IMR-90 (cell line): ENCODE measurements at regions of chr15 and their contacts with region 1.

Region 1: GRCh38 chr15:58227706-58228543 is 89.7 kb downstream of the AQP9 start:
- DNase-seq: peak; percentile 84
- ATAC-seq: peak; percentile 76
- H3K4me3 ChIP-seq: no peak overlapping the region
- H3K27ac ChIP-seq: no peak overlapping the region
- H3K4me1 ChIP-seq: peaks cover 14% of the 10 kb centered on the region
- H3K27me3 ChIP-seq: no peaks in the 10 kb centered on the region
- CTCF ChIP-seq: peak; percentile 95
- POLR2A ChIP-seq: 0 out of 2 replicates have a peak, but pooled peaks have one; percentile 41
- RAD21 ChIP-seq: peak; percentile 99

Region 2: GRCh38 chr15:58498821-58499580 is 271.1 kb after region 1 on chr15:
- CTCF ChIA-PET with region 1: no interaction called
- POLR2A ChIA-PET with region 1: no interaction called
- dilution Hi-C with region 1: no loop called
- in situ Hi-C with region 1: no loop called
- intact Hi-C with region 1: loop called (anchors 1 kb)
- DNase-seq: peak; percentile 98
- ATAC-seq: peak; percentile 94
- H3K4me3 ChIP-seq: no peak overlapping the region
- H3K27ac ChIP-seq: peak overlapping the region; percentile 64
- H3K4me1 ChIP-seq: peaks cover 24% of the 10 kb centered on the region
- H3K27me3 ChIP-seq: no peaks in the 10 kb centered on the region
- CTCF ChIP-seq: no peak
- POLR2A ChIP-seq: no peak
- RAD21 ChIP-seq: no peak; the same call in 1 of the 2 replicates

Region 3: GRCh38 chr15:58749532-58750337 is 521.8 kb after region 1 on chr15 and contains the start of gene ADAM10:
- CTCF ChIA-PET with region 1: interaction called, 4 read pairs
- POLR2A ChIA-PET with region 1: no interaction called
- dilution Hi-C with region 1: no loop called
- in situ Hi-C with region 1: loop called (anchors 25 kb)
- intact Hi-C with region 1: loop called (anchors 2 kb)
- DNase-seq: peak; percentile 99
- ATAC-seq: peak; percentile 94
- H3K4me3 ChIP-seq: peak within 1 kb of the TSS; percentile 74
- H3K27ac ChIP-seq: peak within 1 kb of the TSS; percentile 93
- H3K4me1 ChIP-seq: no peaks in the 10 kb centered on the region
- H3K27me3 ChIP-seq: no peaks in the 10 kb centered on the region
- CTCF ChIP-seq: no peak
- POLR2A ChIP-seq: peak; percentile 86
- RAD21 ChIP-seq: no peak; the same call in 1 of the 2 replicates
- total RNA-seq, gene ADAM10: 185 and 217 TPM in 2 replicates

Region 4: DNA sequence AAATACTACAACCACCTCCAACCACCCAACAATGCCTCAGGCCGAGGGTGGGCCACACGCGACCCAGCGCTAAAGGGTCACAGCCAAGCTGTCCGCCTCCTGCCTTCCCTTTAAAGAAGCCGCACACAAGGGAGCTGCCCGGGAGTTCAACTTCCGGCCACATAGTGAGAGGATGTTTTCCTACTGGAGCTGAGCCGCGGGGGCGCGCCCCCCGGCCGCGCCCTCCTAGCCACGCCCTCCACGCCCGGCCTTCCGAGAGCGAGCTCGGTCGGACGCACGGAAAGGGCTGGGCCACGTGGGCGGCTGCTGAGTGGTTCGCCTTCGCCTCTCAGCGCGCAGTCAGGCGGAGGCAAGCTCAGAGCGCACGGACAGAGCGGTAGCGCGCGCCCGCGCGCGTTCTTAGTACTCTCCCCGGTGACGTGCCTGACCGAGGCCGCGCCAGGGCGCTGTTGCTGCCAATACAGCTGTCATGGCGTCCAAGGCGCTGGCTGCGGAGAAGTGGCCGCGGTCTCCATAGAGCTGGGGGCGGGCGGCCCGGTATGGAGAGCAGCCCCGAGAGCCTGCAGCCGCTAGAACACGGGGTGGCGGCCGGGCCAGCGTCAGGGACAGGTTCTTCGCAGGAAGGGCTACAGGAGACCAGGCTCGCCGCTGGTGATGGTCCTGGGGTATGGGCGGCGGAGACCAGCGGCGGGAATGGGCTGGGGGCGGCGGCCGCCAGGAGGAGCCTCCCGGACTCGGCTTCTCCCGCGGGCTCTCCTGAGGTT is 543.1 kb after region 1 on chr15 and contains the start of gene MINDY2:
- CTCF ChIA-PET with region 1: interaction called, 8 read pairs
- POLR2A ChIA-PET with region 1: no interaction called
- dilution Hi-C with region 1: no loop called
- in situ Hi-C with region 1: loop called (anchors 25 kb)
- intact Hi-C with region 1: loop called (anchors 5 kb)
- DNase-seq: peak; percentile 99
- ATAC-seq: peak; percentile 95
- H3K4me3 ChIP-seq: peak within 1 kb of the TSS; percentile 88
- H3K27ac ChIP-seq: peak within 1 kb of the TSS; percentile 93
- H3K4me1 ChIP-seq: no peaks in the 10 kb centered on the region
- H3K27me3 ChIP-seq: no peaks in the 10 kb centered on the region
- CTCF ChIP-seq: peak; percentile 33; the same call in 1 of the 2 replicates
- POLR2A ChIP-seq: peak; percentile 67; the same call in 1 of the 2 replicates
- RAD21 ChIP-seq: peak; percentile 28
- total RNA-seq, gene MINDY2: 9.3 and 15.0 TPM in 2 replicates

Region 5: GRCh38 chr15:58852347-58852746 is 624.4 kb after region 1 on chr15:
- CTCF ChIA-PET with region 1: interaction called, 3 read pairs
- POLR2A ChIA-PET with region 1: no interaction called
- dilution Hi-C with region 1: no loop called
- in situ Hi-C with region 1: no loop called
- intact Hi-C with region 1: loop called (anchors 10 kb)
- DNase-seq: no peak
- ATAC-seq: no peak
- H3K4me3 ChIP-seq: no peak overlapping the region
- H3K27ac ChIP-seq: no peak overlapping the region
- H3K4me1 ChIP-seq: no peaks in the 10 kb centered on the region
- H3K27me3 ChIP-seq: no peaks in the 10 kb centered on the region
- CTCF ChIP-seq: no peak
- POLR2A ChIP-seq: no peak
- RAD21 ChIP-seq: no peak

Region 6: DNA sequence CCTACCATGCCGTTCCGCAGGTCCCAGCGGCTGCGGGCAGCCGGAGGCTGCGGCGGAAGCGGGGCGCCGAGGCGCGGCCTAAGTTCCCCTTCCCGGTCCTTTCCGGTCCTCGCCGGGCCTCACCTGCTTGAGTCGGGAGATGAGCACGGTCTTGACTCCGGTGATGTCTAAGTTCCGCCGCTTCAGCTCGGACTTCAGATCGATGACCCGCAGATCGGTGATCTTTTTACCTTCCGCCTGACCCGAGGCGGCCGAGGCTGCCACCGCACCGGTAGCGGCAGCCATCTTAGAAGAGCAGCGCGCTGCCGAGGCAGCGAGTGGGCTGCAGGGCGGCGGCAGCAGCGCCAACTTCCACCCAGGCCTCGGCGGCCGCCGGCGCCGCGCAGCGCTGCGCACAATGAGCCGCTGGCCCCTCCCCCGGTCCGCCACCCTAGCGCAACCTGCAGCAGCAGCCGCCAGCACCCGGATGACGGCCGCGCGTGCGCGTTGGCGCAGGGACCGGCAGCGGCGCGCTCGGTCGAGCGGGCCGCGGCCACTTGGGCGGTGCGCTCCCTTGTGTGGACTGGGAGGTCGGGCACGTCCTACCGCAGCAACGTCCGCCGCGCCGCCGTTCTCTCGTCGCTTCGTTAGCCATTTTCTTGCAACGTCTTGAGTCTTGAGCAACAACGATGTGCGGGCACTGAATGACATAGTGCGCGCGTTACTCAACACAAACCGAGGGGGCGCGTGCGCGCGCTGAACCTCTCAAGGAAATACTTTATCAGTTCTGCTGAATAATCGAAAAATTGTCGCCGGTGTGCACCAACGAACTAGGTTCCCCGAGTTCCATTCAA is 705.6 kb after region 1 on chr15 and contains the start of gene SLTM:
- CTCF ChIA-PET with region 1: no interaction called
- POLR2A ChIA-PET with region 1: no interaction called
- dilution Hi-C with region 1: no loop called
- in situ Hi-C with region 1: no loop called
- intact Hi-C with region 1: loop called (anchors 2 kb)
- DNase-seq: peak; percentile 95
- ATAC-seq: peak; percentile 96
- H3K4me3 ChIP-seq: peak within 1 kb of the TSS; percentile 77
- H3K27ac ChIP-seq: peak within 1 kb of the TSS; percentile 97
- H3K4me1 ChIP-seq: no peaks in the 10 kb centered on the region; the same call in 1 of the 2 replicates
- H3K27me3 ChIP-seq: no peaks in the 10 kb centered on the region
- CTCF ChIP-seq: no peak; the same call in none of the 2 replicates
- POLR2A ChIP-seq: peak; percentile 98
- RAD21 ChIP-seq: no peak
- total RNA-seq, gene SLTM: 36.0 and 66.7 TPM in 2 replicates